Activated naive CD4-positive, alpha-beta T cell treated with anti-CD3 and anti-CD28 coated beads, Interleukin-2, amount 10 ng/mL, durations not matched to agents 7 days and 5 days (primary cell): ENCODE measurements at regions of chr2 and their contacts with region 1.

Region 1: GRCh38 chr2:203814661-203815540 is 52.7 kb upstream of the CTLA4 start:
- DNase-seq: peak; percentile 63
- H3K4me3 Mint-ChIP-seq: no peak overlapping the region
- H3K27ac Mint-ChIP-seq: no peak overlapping the region
- H3K4me1 Mint-ChIP-seq: peaks cover 53% of the 10 kb centered on the region
- H3K27me3 Mint-ChIP-seq: peaks cover 12% of the 10 kb centered on the region

Region 2: DNA sequence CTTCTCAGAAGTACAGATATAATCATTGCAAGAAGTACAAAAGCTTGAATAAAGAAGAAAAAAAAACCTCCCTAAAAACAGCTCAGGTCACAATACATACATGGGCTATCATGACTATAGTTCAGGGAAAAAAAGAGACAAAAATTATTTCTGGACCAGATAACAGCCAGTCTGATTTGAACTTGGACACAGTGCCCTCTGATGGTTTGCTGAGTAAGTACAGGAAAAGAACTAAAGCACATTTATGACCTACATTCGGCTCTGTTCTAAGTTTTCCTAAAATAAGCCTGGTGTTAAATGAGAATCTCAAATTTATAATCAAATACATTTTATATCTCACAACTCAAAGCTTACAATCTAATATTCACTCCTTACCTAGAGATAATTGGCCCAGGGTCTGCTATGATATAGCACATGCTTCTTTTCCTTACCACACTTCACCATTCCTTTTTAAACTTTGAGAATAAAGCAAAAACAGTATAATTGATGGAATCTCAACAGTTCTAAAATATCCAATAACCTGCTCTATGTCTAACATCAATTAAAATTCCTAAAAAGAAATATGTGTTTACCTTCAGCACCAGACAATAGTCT is 360.9 kb before region 1 on chr2:
- CTCF ChIA-PET with region 1: interaction called, 15 read pairs
- DNase-seq: peak; percentile 44
- H3K4me3 Mint-ChIP-seq: no peak overlapping the region
- H3K27ac Mint-ChIP-seq: no peak overlapping the region
- H3K4me1 Mint-ChIP-seq: no peaks in the 10 kb centered on the region
- H3K27me3 Mint-ChIP-seq: no peaks in the 10 kb centered on the region

Region 3: GRCh38 chr2:203650860-203651613 is 163.9 kb before region 1 on chr2:
- CTCF ChIA-PET with region 1: interaction called, 24 read pairs
- DNase-seq: no peak
- H3K4me3 Mint-ChIP-seq: no peak overlapping the region
- H3K27ac Mint-ChIP-seq: no peak overlapping the region
- H3K4me1 Mint-ChIP-seq: peaks cover 20% of the 10 kb centered on the region
- H3K27me3 Mint-ChIP-seq: peaks cover 3% of the 10 kb centered on the region

Region 4: DNA sequence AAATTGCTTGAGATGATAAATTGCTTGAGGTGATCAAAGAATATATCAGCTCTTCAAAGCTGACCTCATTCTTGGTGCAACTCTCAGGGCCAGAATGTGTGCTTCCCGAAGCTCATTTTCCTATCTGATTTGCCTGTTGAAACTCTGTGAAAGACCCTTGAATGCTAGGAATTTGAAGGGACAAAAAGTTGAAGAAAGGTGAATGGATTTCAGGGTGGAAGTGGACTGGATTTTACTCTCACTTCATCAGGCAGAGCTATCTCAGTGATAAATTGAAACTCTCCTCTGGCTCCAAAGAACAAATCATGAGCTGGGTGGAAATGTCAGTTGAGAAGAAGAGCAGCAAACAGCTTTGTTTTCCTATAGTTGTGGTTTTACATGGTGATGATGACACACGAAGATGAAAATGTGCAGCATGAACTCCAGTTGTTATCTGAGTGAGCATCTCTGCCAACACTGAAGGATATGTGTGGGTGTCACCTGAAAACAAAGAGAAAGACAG is 74.1 kb before region 1 on chr2:
- CTCF ChIA-PET with region 1: interaction called, 22 read pairs
- DNase-seq: peak; percentile 58
- H3K4me3 Mint-ChIP-seq: peak overlapping the region; percentile 51
- H3K27ac Mint-ChIP-seq: peak overlapping the region; percentile 97
- H3K4me1 Mint-ChIP-seq: peaks cover 83% of the 10 kb centered on the region
- H3K27me3 Mint-ChIP-seq: no peaks in the 10 kb centered on the region

Region 5: DNA sequence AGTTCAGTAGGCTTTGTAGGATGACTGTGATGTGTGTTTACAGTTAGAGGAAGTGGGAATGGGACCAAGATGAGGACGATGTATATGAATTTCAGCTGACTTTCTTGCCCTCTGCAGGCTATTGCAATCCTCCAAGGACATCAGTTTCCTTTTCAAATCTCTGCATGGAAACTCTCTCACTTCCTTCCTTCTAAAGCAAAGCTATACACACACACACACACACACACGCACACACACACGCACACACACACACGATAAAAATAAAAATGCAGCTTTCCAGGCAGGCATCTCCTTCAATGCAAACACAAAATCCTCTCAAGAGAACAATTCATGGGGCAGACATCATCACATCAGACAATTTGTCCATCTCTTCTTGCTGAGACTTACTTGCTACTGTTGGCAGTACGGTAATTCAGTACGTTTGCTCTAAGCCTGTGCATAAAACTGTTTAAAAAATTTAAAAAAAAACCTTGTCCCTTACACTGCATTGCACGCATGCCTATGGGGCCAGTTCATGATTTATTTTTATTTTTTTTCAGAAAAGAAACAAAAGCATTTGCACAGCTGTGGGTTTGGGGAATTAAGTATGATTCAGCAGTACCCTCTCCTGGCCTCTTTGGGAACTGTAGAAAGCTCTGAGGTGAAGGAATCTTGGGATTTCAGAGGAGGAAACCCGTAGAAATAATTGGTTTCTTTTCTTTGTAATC is 94.5 kb after region 1 on chr2:
- CTCF ChIA-PET with region 1: interaction called, 65 read pairs
- DNase-seq: peak; percentile 45
- H3K4me3 Mint-ChIP-seq: peak overlapping the region; percentile 5
- H3K27ac Mint-ChIP-seq: no peak overlapping the region
- H3K4me1 Mint-ChIP-seq: peaks cover 19% of the 10 kb centered on the region
- H3K27me3 Mint-ChIP-seq: peaks cover 4% of the 10 kb centered on the region

Region 6: DNA sequence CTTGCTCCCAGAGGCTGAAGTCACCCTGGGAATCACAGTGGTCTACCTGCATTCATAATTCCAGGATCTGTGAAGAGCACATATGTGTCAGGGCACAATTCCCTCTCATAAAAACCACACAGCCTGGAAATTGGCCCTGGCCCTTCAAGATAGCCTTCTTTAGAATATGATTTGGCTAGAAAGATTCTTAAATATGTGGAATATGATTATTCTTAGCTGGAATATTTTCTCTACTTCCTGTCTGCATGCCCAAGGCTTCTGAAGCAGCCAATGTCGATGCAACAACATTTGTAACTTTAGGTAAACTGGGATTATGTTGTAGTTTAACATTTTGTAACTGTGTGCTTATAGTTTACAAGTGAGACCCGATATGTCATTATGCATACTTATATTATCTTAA is 145.9 kb after region 1 on chr2:
- CTCF ChIA-PET with region 1: no interaction called
- DNase-seq: no peak
- H3K4me3 Mint-ChIP-seq: no peak overlapping the region
- H3K27ac Mint-ChIP-seq: no peak overlapping the region
- H3K4me1 Mint-ChIP-seq: peaks cover 6% of the 10 kb centered on the region
- H3K27me3 Mint-ChIP-seq: no peaks in the 10 kb centered on the region

Region 7: GRCh38 chr2:203994735-203995505 is 180.0 kb after region 1 on chr2:
- CTCF ChIA-PET with region 1: no interaction called
- DNase-seq: no peak
- H3K4me3 Mint-ChIP-seq: no peak overlapping the region
- H3K27ac Mint-ChIP-seq: no peak overlapping the region
- H3K4me1 Mint-ChIP-seq: peaks cover 40% of the 10 kb centered on the region
- H3K27me3 Mint-ChIP-seq: no peaks in the 10 kb centered on the region